WTC11 (cell line): ENCODE measurements at regions of chr12 and their contacts with region 1.

Region 1: GRCh38 chr12:48618541-48618940 is 48.7 kb upstream of the LALBA start:
- DNase-seq: peak; percentile 81
- ATAC-seq: peak; percentile 94
- H3K4me3 Mint-ChIP-seq: no peak overlapping the region
- H3K27ac Mint-ChIP-seq: no peak overlapping the region
- H3K4me1 Mint-ChIP-seq: no peaks in the 10 kb centered on the region; the same call in 1 of the 2 replicates
- H3K27me3 Mint-ChIP-seq: peaks cover 10% of the 10 kb centered on the region
- CTCF ChIP-seq: peak; percentile 96

Region 2: DNA sequence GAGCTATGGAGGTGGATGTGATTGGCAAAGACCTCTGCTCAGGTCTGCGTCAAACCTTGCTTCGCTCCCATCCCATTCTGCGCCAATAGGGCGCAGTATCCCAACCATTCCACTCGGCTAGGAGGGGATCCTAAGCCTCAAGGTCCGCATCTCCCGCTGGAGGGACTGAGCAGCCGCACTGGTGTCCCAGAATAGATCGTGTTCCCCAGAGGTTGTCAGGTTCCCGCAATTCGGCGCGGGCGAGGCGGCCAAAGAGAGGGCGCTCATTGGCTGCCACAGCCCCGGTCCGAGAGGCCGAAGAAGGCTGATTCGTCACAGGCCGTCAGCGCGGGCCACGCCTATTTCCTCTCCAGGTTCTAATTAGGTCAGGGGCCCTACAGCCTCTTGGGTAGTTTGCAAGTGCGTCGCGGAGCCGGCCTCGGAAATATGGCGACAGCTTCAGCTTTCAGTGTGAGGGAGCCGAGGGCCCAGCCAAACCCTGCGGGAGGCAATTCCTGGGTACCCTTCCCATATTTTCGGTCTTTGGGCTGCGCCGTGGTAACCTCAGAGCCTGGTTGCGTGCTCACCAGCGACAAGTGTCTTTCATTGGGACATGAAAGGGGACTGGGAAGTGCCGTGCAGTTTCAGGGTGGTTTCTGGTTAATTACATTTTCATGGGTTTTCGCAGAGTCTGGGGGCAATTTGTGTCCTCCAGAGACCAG is 420.4 kb before region 1 on chr12:
- CTCF ChIA-PET with region 1: interaction called, 22 read pairs
- POLR2A ChIA-PET with region 1: no interaction called
- DNase-seq: peak; percentile 97
- ATAC-seq: peak; percentile 96
- H3K4me3 Mint-ChIP-seq: peak overlapping the region; percentile 78
- H3K27ac Mint-ChIP-seq: peak overlapping the region; percentile 97
- H3K4me1 Mint-ChIP-seq: 0 out of 2 replicates have a peak, but pooled peaks cover 7% of the 10 kb centered on the region
- H3K27me3 Mint-ChIP-seq: peaks cover 78% of the 10 kb centered on the region
- CTCF ChIP-seq: no peak

Region 3: GRCh38 chr12:48286665-48287064 is 331.9 kb before region 1 on chr12:
- CTCF ChIA-PET with region 1: interaction called, 29 read pairs
- POLR2A ChIA-PET with region 1: interaction called, 3 read pairs
- DNase-seq: peak; percentile 38
- ATAC-seq: peak; percentile 84
- H3K4me3 Mint-ChIP-seq: no peak overlapping the region
- H3K27ac Mint-ChIP-seq: no peak overlapping the region
- H3K4me1 Mint-ChIP-seq: peaks cover 3% of the 10 kb centered on the region; the same call in 1 of the 2 replicates
- H3K27me3 Mint-ChIP-seq: peaks cover 83% of the 10 kb centered on the region
- CTCF ChIP-seq: no peak; the same call in 1 of the 2 replicates

Region 4: GRCh38 chr12:48459259-48459658 is 159.3 kb before region 1 on chr12:
- CTCF ChIA-PET with region 1: interaction called, 20 read pairs
- POLR2A ChIA-PET with region 1: no interaction called
- DNase-seq: no peak
- ATAC-seq: no peak
- H3K4me3 Mint-ChIP-seq: no peak overlapping the region
- H3K27ac Mint-ChIP-seq: no peak overlapping the region
- H3K4me1 Mint-ChIP-seq: peaks cover 2% of the 10 kb centered on the region; the same call in 1 of the 2 replicates
- H3K27me3 Mint-ChIP-seq: peaks cover 10% of the 10 kb centered on the region; the same call in 1 of the 2 replicates
- CTCF ChIP-seq: no peak

Region 5: GRCh38 chr12:48542300-48542928 is 76.1 kb before region 1 on chr12:
- CTCF ChIA-PET with region 1: interaction called, 22 read pairs
- POLR2A ChIA-PET with region 1: no interaction called
- DNase-seq: no peak
- ATAC-seq: no peak
- H3K4me3 Mint-ChIP-seq: no peak overlapping the region
- H3K27ac Mint-ChIP-seq: no peak overlapping the region
- H3K4me1 Mint-ChIP-seq: no peaks in the 10 kb centered on the region
- H3K27me3 Mint-ChIP-seq: peaks cover under 1% of the 10 kb centered on the region; the same call in 1 of the 2 replicates
- CTCF ChIP-seq: no peak